Endothelial cell of umbilical vein (primary cell): ENCODE measurements at regions of chr18 and their contacts with region 1.

Region 1: GRCh38 chr18:3245853-3246634 is 1.6 kb upstream of the MYL12A start:
- DNase-seq: peak; percentile 91
- H3K4me3 ChIP-seq: peak overlapping the region; percentile 26 to 75 (median 66)
- H3K27ac ChIP-seq: peak overlapping the region; percentile 83
- H3K4me1 ChIP-seq: peaks cover 26% of the 10 kb centered on the region
- H3K27me3 ChIP-seq: no peaks in the 10 kb centered on the region
- CTCF ChIP-seq: peak; percentile 96
- POLR2A ChIP-seq: no peak

Region 2: DNA sequence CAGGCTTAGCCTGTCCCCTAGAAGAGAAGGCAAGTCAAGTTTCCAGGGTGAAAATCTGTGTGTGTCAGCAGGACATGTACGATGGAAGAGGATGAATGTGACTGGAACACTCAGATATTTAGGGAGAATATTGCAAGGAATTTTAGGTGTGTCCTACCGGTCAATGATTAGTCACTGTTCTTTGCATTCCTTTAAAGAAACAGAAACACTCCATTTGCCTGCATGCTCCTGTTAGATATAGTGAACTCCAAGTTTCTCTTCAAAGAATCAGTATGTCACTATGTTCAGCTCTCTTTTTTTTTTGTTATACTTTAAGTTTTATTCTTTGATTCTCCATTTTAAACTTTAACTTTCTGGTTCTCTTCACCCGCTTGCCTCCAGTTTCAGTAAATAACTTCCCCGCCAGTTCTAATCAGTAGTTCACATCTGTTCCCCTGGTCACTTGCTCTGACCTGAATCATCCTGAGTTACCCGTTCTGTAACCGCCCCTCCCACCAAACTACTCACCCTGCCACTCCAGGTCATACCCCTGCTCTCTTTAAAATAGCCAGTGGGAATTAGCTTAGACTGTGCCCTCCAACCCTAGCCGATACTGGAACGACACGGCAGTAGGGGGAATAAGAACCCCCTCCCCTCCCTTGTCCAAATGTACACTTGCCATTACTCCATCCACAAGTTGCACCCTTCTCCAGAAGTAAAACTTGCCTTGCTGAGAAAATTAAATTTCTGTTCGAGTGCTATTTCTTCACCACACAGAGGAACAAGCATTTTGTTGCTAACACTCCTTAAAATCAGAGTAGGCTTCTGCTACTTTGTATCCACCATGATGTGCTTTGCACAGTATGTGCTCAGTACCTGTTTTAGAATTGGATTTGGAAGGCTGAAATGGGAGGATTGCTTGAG is 943.2 kb before region 1 on chr18:
- CTCF ChIA-PET with region 1: no interaction called
- POLR2A ChIA-PET with region 1: no interaction called
- dilution Hi-C with region 1: no loop called
- intact Hi-C with region 1: loop called (anchors 10 kb)
- DNase-seq: peak; percentile 46
- H3K4me3 ChIP-seq: no peak overlapping the region
- H3K27ac ChIP-seq: peak overlapping the region; percentile 78
- H3K4me1 ChIP-seq: peaks cover 42% of the 10 kb centered on the region
- H3K27me3 ChIP-seq: no peaks in the 10 kb centered on the region
- CTCF ChIP-seq: no peak
- POLR2A ChIP-seq: peak; percentile 10

Region 3: GRCh38 chr18:2655178-2655953 is 590.7 kb before region 1 on chr18 and contains the start of gene SMCHD1:
- CTCF ChIA-PET with region 1: no interaction called
- POLR2A ChIA-PET with region 1: interaction called, 3 read pairs
- dilution Hi-C with region 1: no loop called
- intact Hi-C with region 1: loop called (anchors 1 kb)
- DNase-seq: peak; percentile 81
- H3K4me3 ChIP-seq: peak within 1 kb of the TSS; percentile 60 to 99 (median 78)
- H3K27ac ChIP-seq: peak within 1 kb of the TSS; percentile 90
- H3K4me1 ChIP-seq: peaks cover 32% of the 10 kb centered on the region
- H3K27me3 ChIP-seq: peaks cover 0 to 4% of the 10 kb centered on the region in 2 experiments
- CTCF ChIP-seq: no peak
- POLR2A ChIP-seq: peak; percentile 36
- total RNA-seq, gene SMCHD1: 36.2 and 39.9 TPM in 2 replicates

Region 4: DNA sequence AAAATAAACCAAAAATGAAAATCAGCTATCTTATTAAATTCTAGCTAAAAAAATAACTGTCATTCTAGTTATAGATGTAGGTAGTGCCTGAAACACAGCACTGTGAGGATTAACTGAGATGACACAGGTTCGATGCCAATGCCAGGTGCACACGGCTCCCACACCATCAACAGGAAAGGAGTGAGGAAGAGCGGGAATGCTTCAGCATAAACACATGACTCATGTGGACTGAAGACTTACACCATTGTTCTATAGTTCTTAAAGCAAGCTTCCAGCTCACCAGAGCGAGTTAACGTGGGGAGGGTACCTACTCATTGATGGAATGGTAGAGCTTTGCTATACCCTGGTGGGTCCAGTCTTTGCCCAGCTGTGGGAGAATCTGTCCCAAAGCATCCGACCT is 322.6 kb before region 1 on chr18:
- CTCF ChIA-PET with region 1: interaction called, 12 read pairs
- POLR2A ChIA-PET with region 1: interaction called, 5 read pairs
- dilution Hi-C with region 1: no loop called
- intact Hi-C with region 1: loop called (anchors 2 kb)
- DNase-seq: peak; percentile 84
- H3K4me3 ChIP-seq: no peak overlapping the region
- H3K27ac ChIP-seq: peak overlapping the region; percentile 46
- H3K4me1 ChIP-seq: peaks cover 6% of the 10 kb centered on the region
- H3K27me3 ChIP-seq: no peaks in the 10 kb centered on the region
- CTCF ChIP-seq: no peak
- POLR2A ChIP-seq: no peak

Region 5: GRCh38 chr18:3012964-3013804 is 232.9 kb before region 1 on chr18 and contains the start of gene LPIN2:
- CTCF ChIA-PET with region 1: interaction called, 13 read pairs
- POLR2A ChIA-PET with region 1: interaction called, 8 read pairs
- dilution Hi-C with region 1: no loop called
- intact Hi-C with region 1: loop called (anchors 1 kb)
- DNase-seq: peak; percentile 98
- H3K4me3 ChIP-seq: peak within 1 kb of the TSS; percentile 74 to 96 (median 94)
- H3K27ac ChIP-seq: peak within 1 kb of the TSS; percentile 90
- H3K4me1 ChIP-seq: peaks cover 67% of the 10 kb centered on the region
- H3K27me3 ChIP-seq: no peaks in the 10 kb centered on the region
- CTCF ChIP-seq: no peak
- POLR2A ChIP-seq: peak; percentile 61
- total RNA-seq, gene LPIN2: 21.8 and 24.4 TPM in 2 replicates

Region 6: DNA sequence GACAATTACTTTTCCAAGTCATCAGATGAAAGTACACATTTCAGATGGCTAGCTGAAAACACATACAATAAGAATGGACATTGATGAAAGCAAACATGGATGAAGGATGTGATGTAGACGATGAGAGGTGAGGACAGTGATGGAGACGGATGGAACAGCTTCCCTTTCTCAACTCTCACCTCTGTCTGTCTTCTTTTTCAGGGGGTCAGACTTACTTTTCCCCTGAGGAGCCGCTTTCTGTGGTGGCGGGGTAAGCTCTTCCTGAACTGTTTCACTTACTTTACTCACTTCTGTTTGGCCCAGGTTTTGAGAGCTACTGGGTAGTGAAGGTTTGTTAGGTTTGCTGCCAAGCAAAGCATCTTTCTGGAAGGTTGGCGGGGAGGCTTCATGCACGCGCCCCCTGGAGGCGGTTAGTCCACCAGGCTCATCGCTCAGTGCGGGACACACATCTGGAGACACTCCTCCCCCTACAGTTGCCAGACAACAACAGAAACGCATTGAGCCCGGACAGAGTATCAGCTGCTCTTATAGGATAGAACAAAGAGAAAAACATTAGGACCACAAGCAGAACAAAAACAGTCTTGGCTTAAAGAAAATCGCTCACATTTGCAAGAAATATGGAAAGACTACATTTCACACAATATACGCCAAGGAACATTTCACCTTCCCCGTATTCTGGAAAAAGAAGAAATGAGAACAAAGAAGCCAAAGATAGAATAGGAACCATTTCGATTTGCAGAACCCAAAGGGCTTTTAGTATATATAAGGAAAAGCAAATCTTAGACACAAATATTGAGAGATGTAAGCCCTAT is 116.8 kb before region 1 on chr18:
- CTCF ChIA-PET with region 1: interaction called, 13 read pairs
- POLR2A ChIA-PET with region 1: no interaction called
- dilution Hi-C with region 1: no loop called
- intact Hi-C with region 1: loop called (anchors 1 kb)
- DNase-seq: peak; percentile 87
- H3K4me3 ChIP-seq: no peak overlapping the region
- H3K27ac ChIP-seq: no peak overlapping the region
- H3K4me1 ChIP-seq: no peaks in the 10 kb centered on the region
- H3K27me3 ChIP-seq: no peaks in the 10 kb centered on the region
- CTCF ChIP-seq: peak; percentile 95 to 96
- POLR2A ChIP-seq: no peak

Region 7: DNA sequence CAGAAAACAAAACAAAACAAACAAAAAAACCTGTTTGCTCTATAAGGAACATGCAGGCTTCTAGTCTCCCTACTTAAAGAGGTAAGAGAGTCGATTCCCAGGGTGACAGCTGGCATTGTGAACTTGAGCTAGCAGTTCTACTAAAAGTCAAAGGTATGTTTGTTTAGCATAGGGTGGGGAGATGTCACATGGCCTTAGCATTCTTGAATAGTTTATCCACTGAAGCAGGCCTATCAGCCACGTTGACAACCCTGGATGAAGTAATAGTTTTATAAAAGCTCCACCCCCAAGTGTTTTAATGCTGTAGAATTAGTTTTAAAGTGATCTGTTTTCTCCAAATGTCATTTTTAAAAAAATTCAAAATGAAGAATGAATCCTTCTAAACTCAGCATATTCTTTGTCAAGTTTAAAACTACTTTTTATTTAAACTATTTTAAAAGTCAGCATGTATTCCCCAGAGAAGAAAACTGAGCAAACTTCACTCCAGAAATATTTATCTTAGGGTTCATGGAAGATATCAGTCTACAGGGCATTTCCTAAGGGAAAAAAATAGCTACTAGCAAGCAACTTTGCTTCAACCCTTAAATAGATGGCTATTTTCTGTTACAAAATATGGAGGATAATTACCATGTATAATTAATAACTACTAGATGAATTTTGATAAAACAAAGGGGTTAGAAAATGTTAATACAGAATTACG is 27.9 kb before region 1 on chr18:
- CTCF ChIA-PET with region 1: no interaction called
- POLR2A ChIA-PET with region 1: no interaction called
- dilution Hi-C with region 1: no loop called
- intact Hi-C with region 1: no loop called
- DNase-seq: no peak
- H3K4me3 ChIP-seq: no peak overlapping the region
- H3K27ac ChIP-seq: no peak overlapping the region
- H3K4me1 ChIP-seq: no peaks in the 10 kb centered on the region
- H3K27me3 ChIP-seq: peaks cover 3 to 4% of the 10 kb centered on the region in 2 experiments
- CTCF ChIP-seq: no peak
- POLR2A ChIP-seq: no peak

Region 8: GRCh38 chr18:3593904-3594661 is 348.0 kb after region 1 on chr18:
- CTCF ChIA-PET with region 1: interaction called, 5 read pairs
- POLR2A ChIA-PET with region 1: interaction called, 6 read pairs
- dilution Hi-C with region 1: no loop called
- intact Hi-C with region 1: loop called (anchors 1 kb)
- DNase-seq: peak; percentile 98
- H3K4me3 ChIP-seq: peak overlapping the region; percentile 8 to 93 (median 48)
- H3K27ac ChIP-seq: peak overlapping the region; percentile 100
- H3K4me1 ChIP-seq: peaks cover 48% of the 10 kb centered on the region
- H3K27me3 ChIP-seq: no peaks in the 10 kb centered on the region
- CTCF ChIP-seq: peak; percentile 62 to 80
- POLR2A ChIP-seq: peak; percentile 81